ENCODE measurements at regions of chr2 and their contacts with region 1.

Region 1: GRCh38 chr2:178193823-178194599 is at the start of gene OSBPL6:
- DNase-seq: peak; percentile 90
- H3K4me3 ChIP-seq: peak within 1 kb of the TSS; percentile 48 to 97 (median 84)
- H3K27ac ChIP-seq: peak within 1 kb of the TSS; percentile 91 to 95 (median 92)
- H3K4me1 ChIP-seq: peaks cover 0 to 12% (median 9%) of the 10 kb centered on the region in 4 donors
- H3K27me3 ChIP-seq: no peaks in the 10 kb centered on the region
- CTCF ChIP-seq: peak in 1 of 4 experiments; percentile 25
- EP300 ChIP-seq: no peak
- POLR2A ChIP-seq: peak in 1 of 2 donors; percentile 30
- total RNA-seq, gene OSBPL6: 1.5 to 3.2 (median 2.3) TPM

Region 2: DNA sequence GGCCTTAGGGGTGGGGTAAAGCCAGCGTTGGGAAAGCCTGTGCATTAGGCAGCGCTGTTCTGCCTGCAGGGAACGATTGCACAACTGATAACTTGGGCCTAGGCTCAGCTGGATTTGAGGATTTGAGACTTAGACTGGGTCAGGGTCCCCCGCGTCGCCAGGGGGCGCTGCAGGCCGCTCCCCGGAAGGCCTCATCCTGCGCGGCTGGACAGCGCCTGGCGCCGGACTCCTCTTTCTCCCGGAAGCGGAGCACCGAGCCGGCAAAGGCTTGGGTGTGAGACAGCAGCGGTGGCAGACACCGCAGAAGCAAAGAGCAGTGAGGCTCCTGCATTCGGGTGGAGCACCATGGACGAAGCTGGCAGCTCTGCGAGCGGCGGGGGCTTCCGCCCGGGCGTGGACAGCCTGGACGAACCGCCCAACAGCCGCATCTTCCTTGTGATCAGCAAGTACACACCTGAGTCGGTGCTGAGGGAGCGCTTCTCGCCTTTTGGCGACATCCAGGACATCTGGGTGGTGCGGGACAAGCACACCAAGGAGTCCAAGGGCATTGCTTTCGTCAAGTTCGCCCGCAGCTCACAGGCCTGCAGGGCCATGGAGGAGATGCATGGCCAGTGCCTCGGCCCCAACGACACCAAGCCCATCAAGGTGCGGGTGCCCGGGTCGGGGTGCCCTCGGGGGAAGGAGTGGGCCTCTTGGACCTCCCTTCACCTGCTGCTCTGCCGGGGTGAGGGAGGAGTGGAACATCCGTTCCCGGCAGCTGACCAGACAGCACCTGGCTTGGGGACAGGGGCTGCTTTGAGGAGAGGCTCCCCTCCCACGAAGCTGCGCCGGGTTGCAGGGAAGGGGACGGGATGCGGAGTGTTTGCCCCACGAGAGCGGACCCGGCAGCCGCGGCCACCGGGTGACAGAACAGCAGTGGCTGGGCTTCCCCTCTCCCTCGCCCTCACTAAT is 81.5 kb before region 1 on chr2 and contains the start of gene RBM45:
- intact Hi-C with region 1: loop called (anchors 2 kb)
- DNase-seq: peak; percentile 95
- H3K4me3 ChIP-seq: peak within 1 kb of the TSS; percentile 73 to 89 (median 80)
- H3K27ac ChIP-seq: peak within 1 kb of the TSS; percentile 76 to 82 (median 80)
- H3K4me1 ChIP-seq: peaks cover 0 to 16% (median 13%) of the 10 kb centered on the region in 4 donors
- H3K27me3 ChIP-seq: no peaks in the 10 kb centered on the region
- CTCF ChIP-seq: peak; percentile 83 to 92 (median 88)
- EP300 ChIP-seq: no peak
- POLR2A ChIP-seq: peak in 1 of 2 donors; percentile 35
- total RNA-seq, gene RBM45: 11.0 to 16.3 (median 14.0) TPM

Region 3: GRCh38 chr2:178128836-178129630 is 65.0 kb before region 1 on chr2:
- intact Hi-C with region 1: loop called (anchors 2 kb)
- DNase-seq: no peak
- H3K4me3 ChIP-seq: no peak overlapping the region
- H3K27ac ChIP-seq: no peak overlapping the region
- H3K4me1 ChIP-seq: no peaks in the 10 kb centered on the region
- H3K27me3 ChIP-seq: no peaks in the 10 kb centered on the region
- CTCF ChIP-seq: no peak
- EP300 ChIP-seq: no peak
- POLR2A ChIP-seq: no peak

Region 4: GRCh38 chr2:178241844-178242551 is 48.0 kb after region 1 on chr2:
- intact Hi-C with region 1: loop called (anchors 5 kb)
- DNase-seq: peak; percentile 80
- H3K4me3 ChIP-seq: no peak overlapping the region
- H3K27ac ChIP-seq: peak overlapping the region in 3 of 4 donors; percentile 0 to 41 (median 36)
- H3K4me1 ChIP-seq: peaks cover 0 to 13% (median 6%) of the 10 kb centered on the region in 4 donors
- H3K27me3 ChIP-seq: no peaks in the 10 kb centered on the region
- CTCF ChIP-seq: no peak
- EP300 ChIP-seq: no peak
- POLR2A ChIP-seq: no peak

Region 5: GRCh38 chr2:178279142-178279541 is 85.1 kb after region 1 on chr2:
- intact Hi-C with region 1: loop called (anchors 5 kb)
- DNase-seq: no peak
- H3K4me3 ChIP-seq: no peak overlapping the region
- H3K27ac ChIP-seq: no peak overlapping the region
- H3K4me1 ChIP-seq: peaks cover 0 to 6% (median 0%) of the 10 kb centered on the region in 4 donors
- H3K27me3 ChIP-seq: no peaks in the 10 kb centered on the region
- CTCF ChIP-seq: no peak
- EP300 ChIP-seq: no peak
- POLR2A ChIP-seq: no peak

Region 6: DNA sequence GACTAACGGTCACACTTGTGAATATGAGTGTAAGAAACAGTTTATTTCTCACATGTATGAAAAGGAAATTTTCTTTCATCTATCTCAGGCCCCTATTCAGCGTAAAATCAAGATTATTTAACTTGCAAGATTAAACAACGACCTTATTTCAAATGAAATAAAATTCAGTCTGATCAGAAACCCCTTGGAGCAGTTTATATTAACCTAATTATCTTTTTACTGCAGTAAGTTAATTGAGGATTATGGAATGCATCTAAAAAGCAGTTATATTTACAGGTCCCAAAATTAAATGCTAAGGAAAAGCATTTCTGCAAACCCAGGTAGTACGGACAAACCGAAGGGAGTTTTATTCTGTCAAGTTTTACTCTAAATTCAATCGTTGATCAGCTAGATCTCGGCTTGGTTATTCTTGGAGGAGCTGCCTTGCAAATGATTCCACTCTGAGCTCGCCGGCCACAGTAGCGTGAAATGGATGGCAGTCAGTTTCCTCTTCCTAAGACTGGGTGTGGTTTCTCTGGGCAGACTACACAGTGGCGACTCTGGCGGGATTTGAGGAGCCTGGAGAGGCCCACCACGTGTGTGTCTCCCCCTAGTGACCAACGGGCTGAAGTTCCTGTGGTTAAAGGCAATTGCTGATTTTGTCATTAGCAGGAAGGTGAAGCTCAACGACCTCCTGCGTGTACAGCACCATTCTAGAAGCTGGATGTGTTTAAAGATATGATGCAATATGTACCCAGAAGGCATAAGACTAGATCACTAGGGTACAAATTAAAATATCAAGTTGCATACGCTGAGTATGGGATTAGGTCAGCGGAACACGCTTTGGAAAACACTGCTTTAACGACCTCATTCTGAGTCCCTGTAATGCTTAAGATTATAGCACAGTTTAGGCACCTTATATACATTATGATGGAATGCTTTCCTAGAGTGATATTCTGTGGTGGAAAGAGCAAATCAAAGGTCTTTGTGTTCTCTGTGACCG is 220.5 kb after region 1 on chr2:
- intact Hi-C with region 1: loop called (anchors 5 kb)
- DNase-seq: peak; percentile 95
- H3K4me3 ChIP-seq: peak overlapping the region; percentile 46 to 63 (median 62)
- H3K27ac ChIP-seq: peak overlapping the region; percentile 90 to 94 (median 91)
- H3K4me1 ChIP-seq: peaks cover 0 to 23% (median 5%) of the 10 kb centered on the region in 4 donors
- H3K27me3 ChIP-seq: no peaks in the 10 kb centered on the region
- CTCF ChIP-seq: peak; percentile 72 to 88 (median 86)
- EP300 ChIP-seq: no peak
- POLR2A ChIP-seq: no peak

Measured in sigmoid colon (tissue), 7 donors.